ENCODE measurements at regions of chr1 and their contacts with region 1.

Region 1: DNA sequence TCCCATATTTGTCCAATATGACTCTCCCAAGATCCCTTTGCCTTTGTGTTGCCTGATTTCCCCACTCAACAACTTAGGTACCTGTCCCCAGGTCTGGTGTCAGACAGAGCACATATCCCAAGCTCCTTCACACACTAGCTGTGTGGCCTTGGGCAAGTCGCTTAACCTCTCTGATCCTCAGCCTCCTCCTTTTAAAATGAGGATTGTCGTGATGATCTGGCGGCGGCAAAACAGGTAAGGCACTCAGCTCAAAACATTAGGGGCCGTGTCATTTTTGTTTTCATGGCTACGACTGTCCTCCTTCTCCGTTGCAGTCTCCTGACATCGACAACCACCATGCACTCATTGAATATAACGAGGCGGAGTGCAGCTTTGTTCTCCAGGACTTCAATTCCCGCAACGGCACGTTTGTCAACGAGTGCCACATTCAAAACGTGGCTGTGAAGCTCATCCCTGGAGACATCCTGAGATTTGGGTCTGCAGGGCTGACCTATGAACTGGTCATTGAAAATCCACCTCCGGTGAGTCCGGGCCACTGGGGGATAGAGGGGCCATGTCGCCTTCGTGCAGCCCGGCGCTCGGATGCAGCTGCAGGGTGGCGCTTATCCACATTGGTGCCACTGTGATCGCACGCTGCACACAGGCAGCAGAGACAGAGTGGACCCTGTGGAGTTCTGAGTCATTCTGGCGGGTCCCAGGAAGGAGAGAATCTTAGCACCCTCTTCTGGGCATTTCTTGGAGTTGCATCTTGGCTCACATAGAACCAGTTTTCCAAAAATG is 25.2 kb downstream of the FHAD1 start:
- DNase-seq: peak; percentile 68
- H3K4me3 ChIP-seq: no peak overlapping the region
- H3K27ac ChIP-seq: peak overlapping the region in 2 of 4 donors; percentile 53 to 62
- H3K4me1 ChIP-seq: peaks cover 0 to 26% (median 6%) of the 10 kb centered on the region in 4 donors
- H3K27me3 ChIP-seq: no peaks in the 10 kb centered on the region
- CTCF ChIP-seq: peak; percentile 76 to 90 (median 78)
- EP300 ChIP-seq: no peak
- POLR2A ChIP-seq: no peak

Region 2: DNA sequence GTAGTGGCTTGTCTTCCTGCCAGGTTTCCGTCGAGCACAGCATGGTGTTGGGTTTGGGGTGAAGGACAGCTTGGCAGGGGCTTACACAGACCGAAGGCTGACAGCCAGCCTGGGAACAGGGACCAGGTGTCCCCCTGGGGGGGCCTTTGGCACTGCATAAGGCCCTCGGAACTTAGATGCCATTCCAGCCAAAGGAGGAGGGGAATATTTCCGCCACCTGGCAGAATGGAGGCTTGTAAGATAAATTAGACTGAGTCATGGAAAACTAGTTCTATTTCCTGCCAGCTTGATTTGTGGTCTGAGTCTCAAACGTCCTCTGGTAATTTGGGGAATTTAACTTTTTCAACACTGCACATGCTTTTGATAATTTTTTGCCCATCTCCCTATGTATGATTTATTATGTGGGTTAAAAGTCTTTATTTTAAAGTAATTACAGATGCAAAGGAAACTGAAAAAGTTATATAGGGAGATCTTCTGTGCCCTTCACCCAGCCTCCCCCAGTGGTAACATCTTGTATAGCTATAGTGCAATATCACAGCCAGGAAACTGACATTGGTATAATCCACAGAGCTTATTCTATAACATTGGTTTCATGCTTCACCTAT is 130.2 kb before region 1 on chr1:
- in situ Hi-C with region 1: loop called in 2 of 4 experiments (anchors 10 kb)
- intact Hi-C with region 1: no loop called
- DNase-seq: no peak
- H3K4me3 ChIP-seq: no peak overlapping the region
- H3K27ac ChIP-seq: no peak overlapping the region
- H3K4me1 ChIP-seq: no peaks in the 10 kb centered on the region
- H3K27me3 ChIP-seq: no peaks in the 10 kb centered on the region
- CTCF ChIP-seq: no peak
- EP300 ChIP-seq: no peak
- POLR2A ChIP-seq: no peak

Region 3: DNA sequence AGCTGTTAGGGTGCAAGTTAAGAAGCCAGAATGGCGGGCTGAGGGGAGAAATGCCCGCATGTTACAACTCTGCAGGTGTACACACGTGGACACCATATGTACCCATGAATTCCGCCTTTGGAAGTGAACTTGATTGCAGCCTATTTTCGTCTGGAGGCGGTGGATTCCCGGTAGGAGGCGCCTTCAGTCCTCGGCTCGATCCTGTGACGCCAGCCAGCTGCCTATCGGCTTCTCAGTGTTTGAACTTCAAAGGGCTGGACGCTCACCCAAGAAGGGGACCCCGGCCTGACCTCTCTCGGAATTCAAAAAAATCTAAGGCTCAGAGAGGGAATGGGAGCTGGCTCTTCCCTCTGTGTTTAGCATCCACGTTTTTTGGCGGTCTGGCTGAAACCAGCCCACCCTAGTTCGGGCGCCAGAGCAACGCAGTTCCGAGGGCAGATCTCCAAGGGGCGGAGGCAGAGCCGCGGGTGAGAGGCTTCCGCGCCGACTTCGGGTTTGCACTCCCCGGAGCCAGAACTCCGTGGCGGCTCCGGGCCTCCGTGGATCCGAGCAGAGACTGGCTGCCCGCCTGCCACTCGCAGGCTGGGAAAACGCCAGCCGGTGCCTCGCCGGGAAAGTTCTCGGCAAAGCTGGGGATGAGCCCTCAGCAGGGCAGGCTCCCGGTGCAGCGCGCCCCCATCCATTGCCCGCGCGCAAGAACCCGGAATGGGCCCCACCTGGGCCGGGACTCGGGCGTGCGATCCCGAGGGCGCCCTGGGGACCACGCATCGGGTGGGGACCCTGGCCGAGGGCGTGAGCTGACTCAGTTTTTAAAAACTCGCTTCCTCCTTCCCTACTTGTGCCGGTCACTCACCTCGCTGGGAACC is 119.6 kb before region 1 on chr1:
- in situ Hi-C with region 1: loop called (anchors 10 kb)
- intact Hi-C with region 1: loop called (anchors 5 kb)
- DNase-seq: peak; percentile 92
- H3K4me3 ChIP-seq: peak overlapping the region; percentile 64 to 90 (median 77)
- H3K27ac ChIP-seq: peak overlapping the region; percentile 91 to 98 (median 96)
- H3K4me1 ChIP-seq: peaks cover under 1 to 43% (median 32%) of the 10 kb centered on the region in 4 donors
- H3K27me3 ChIP-seq: no peaks in the 10 kb centered on the region
- CTCF ChIP-seq: peak; percentile 57 to 83 (median 62)
- EP300 ChIP-seq: no peak
- POLR2A ChIP-seq: peak; percentile 51